ENCODE measurements at regions of chr3 and their contacts with region 1.

Region 1: GRCh38 chr3:197847866-197848401 is 56.9 kb downstream of the LRCH3 start:
- DNase-seq: peak; percentile 58
- ATAC-seq: peak; percentile 98
- H3K4me3 ChIP-seq: 0 out of 2 replicates have a peak overlapping the region, but pooled peaks have one; percentile 0
- H3K27ac ChIP-seq: peak overlapping the region; percentile 52
- H3K4me1 ChIP-seq: peaks cover 13% of the 10 kb centered on the region
- H3K27me3 ChIP-seq: no peaks in the 10 kb centered on the region
- CTCF ChIP-seq: no peak
- EP300 ChIP-seq: no peak
- POLR2A ChIP-seq: no peak
- RAD21 ChIP-seq: no peak

Region 2: DNA sequence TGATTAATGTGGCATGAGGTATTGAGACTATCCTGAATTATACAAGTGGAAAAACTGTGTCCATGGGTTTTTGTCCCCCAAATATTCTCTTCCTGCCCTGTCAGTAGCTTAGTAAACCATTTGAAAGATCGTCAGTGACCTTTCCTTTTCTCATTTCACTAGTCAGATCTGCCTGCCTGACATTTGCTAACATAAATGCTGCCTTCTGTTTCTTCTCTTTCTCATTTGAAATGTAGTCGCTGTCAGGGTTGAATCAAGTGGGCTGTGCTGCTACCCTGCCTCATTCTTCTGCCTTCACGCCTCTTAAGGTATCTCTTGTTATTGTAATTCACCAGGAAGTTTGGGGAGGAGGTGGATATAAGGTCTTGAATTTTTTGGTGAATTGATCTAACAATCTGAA is 10.7 kb after region 1 on chr3:
- CTCF ChIA-PET with region 1: interaction called, 5 read pairs
- POLR2A ChIA-PET with region 1: interaction called, 11 read pairs
- RAD21 ChIA-PET with region 1: no interaction called
- SMC1A ChIA-PET with region 1: interaction called, 7 read pairs
- in situ Hi-C with region 1: no loop called
- intact Hi-C with region 1: no loop called
- DNase-seq: no peak
- ATAC-seq: peak; percentile 43
- H3K4me3 ChIP-seq: no peak overlapping the region
- H3K27ac ChIP-seq: no peak overlapping the region
- H3K4me1 ChIP-seq: no peaks in the 10 kb centered on the region; the same call in 1 of the 2 replicates
- H3K27me3 ChIP-seq: no peaks in the 10 kb centered on the region
- CTCF ChIP-seq: no peak
- EP300 ChIP-seq: no peak
- POLR2A ChIP-seq: no peak
- RAD21 ChIP-seq: no peak

Measured in GM12878 (cell line).